Activated naive CD4-positive, alpha-beta T cell treated with anti-CD3 and anti-CD28 coated beads for 36 hours (primary cell): ENCODE measurements at regions of chr13 and their contacts with region 1.

Region 1: GRCh38 chr13:52450012-52450792 is at the start of gene VPS36:
- DNase-seq: peak; percentile 94
- H3K4me3 Mint-ChIP-seq: peak within 1 kb of the TSS; percentile 92
- H3K27ac Mint-ChIP-seq: peak within 1 kb of the TSS; percentile 86
- H3K4me1 Mint-ChIP-seq: peaks cover 30% of the 10 kb centered on the region
- H3K27me3 Mint-ChIP-seq: no peaks in the 10 kb centered on the region
- total RNA-seq, gene VPS36: 25.3 to 32.0 TPM

Region 2: DNA sequence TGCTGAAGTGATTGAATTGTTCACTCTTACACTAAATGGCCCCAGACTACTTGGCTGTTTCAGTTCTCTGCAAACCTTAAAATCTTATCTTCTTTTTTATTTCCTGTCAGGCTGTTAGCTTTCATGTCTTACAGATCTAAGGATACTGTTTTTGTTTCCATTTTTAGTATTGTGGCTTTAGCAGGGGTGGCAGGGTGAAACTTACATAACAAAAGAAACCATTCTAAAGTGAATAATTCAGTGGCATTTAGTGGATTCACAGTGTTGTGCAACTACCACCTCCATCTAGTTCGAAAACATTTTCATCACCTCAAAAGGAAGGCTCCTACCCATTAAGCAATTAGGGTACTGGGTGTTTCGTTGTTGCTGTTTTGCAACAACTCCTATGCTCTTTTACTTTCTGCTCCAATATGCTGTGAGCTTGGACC is 625.0 kb before region 1 on chr13:
- CTCF ChIA-PET with region 1: no interaction called
- intact Hi-C with region 1: loop called (anchors 2 kb)
- DNase-seq: no peak
- H3K4me3 Mint-ChIP-seq: peak overlapping the region; percentile 77
- H3K27ac Mint-ChIP-seq: peak overlapping the region; percentile 98
- H3K4me1 Mint-ChIP-seq: peaks cover 84% of the 10 kb centered on the region
- H3K27me3 Mint-ChIP-seq: no peaks in the 10 kb centered on the region

Region 3: DNA sequence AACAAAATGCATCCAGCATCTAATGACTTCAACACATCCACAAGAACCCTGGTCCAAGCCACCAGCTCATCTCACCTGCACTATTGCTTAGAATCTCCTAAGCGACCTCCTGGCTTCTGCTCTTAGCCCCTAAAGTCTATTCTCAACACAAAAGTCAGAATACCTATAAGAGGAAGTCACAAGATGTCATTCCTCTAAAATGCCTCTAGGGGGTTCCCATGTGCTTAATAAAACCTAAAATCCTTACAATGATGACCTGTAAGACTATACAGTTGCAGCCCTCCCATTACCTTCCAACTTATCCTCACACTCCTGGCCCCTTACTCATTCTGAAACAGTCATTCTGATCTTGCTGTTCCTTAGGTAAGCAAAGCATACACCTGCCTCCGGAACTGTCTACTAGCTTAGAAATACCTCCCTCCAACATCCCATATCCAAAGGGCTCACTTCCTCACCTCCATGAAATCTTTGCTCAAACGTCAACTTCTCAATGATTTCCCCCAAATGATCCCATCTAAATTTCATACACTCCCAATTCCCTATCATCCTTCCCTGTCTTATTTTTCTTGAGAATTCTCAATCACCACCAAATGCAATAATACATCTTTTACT is 449.0 kb before region 1 on chr13:
- CTCF ChIA-PET with region 1: no interaction called
- intact Hi-C with region 1: loop called (anchors 1 kb)
- DNase-seq: no peak
- H3K4me3 Mint-ChIP-seq: no peak overlapping the region
- H3K27ac Mint-ChIP-seq: no peak overlapping the region
- H3K4me1 Mint-ChIP-seq: no peaks in the 10 kb centered on the region
- H3K27me3 Mint-ChIP-seq: no peaks in the 10 kb centered on the region

Region 4: DNA sequence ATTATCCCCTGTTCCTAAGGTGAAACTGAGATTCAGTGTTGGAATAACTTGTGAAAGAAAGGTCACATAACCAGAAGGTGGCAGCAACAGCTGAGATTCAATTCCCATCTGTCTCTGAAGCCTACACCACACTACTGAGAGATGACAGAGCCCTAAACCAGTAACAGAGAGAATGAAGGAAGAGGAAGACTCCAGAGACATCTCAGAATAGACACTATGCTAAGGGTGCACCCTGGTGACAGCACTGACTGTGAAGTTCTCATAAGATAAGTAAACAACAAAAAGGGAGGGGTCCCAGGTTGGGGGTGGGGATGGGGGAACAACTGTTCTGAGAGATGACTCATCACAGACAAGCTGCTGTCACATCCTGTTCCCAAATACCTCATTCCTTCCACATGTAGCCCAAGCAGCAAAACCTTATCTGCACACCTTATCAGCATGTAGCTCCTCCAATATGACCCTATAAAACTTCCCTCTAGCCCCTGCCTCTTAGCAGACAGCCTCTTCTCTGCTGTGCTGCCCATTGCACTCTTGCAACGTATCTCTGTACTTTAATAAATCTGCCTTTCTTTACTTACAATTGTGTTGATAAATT is 379.2 kb before region 1 on chr13:
- CTCF ChIA-PET with region 1: no interaction called
- intact Hi-C with region 1: loop called (anchors 1 kb)
- DNase-seq: peak; percentile 73
- H3K4me3 Mint-ChIP-seq: no peak overlapping the region
- H3K27ac Mint-ChIP-seq: no peak overlapping the region
- H3K4me1 Mint-ChIP-seq: peaks cover 11% of the 10 kb centered on the region
- H3K27me3 Mint-ChIP-seq: peaks cover 16% of the 10 kb centered on the region

Region 5: GRCh38 chr13:52194184-52194868 is 255.9 kb before region 1 on chr13:
- CTCF ChIA-PET with region 1: interaction called, 4 read pairs
- intact Hi-C with region 1: loop called (anchors 1 kb)
- DNase-seq: peak; percentile 90
- H3K4me3 Mint-ChIP-seq: peak overlapping the region; percentile 98
- H3K27ac Mint-ChIP-seq: peak overlapping the region; percentile 97
- H3K4me1 Mint-ChIP-seq: peaks cover 30% of the 10 kb centered on the region
- H3K27me3 Mint-ChIP-seq: no peaks in the 10 kb centered on the region

Region 6: GRCh38 chr13:52405767-52406494 is 44.3 kb before region 1 on chr13 and contains the start of gene THSD1:
- CTCF ChIA-PET with region 1: interaction called, 7 read pairs
- intact Hi-C with region 1: loop called (anchors 2 kb)
- DNase-seq: peak; percentile 28
- H3K4me3 Mint-ChIP-seq: peak within 1 kb of the TSS; percentile 52
- H3K27ac Mint-ChIP-seq: no peak within 1 kb of the TSS
- H3K4me1 Mint-ChIP-seq: peaks cover 17% of the 10 kb centered on the region
- H3K27me3 Mint-ChIP-seq: peaks cover 30% of the 10 kb centered on the region
- total RNA-seq, gene THSD1: 0.07 TPM in 1 of 2 experiments, not detected in the other

Region 7: DNA sequence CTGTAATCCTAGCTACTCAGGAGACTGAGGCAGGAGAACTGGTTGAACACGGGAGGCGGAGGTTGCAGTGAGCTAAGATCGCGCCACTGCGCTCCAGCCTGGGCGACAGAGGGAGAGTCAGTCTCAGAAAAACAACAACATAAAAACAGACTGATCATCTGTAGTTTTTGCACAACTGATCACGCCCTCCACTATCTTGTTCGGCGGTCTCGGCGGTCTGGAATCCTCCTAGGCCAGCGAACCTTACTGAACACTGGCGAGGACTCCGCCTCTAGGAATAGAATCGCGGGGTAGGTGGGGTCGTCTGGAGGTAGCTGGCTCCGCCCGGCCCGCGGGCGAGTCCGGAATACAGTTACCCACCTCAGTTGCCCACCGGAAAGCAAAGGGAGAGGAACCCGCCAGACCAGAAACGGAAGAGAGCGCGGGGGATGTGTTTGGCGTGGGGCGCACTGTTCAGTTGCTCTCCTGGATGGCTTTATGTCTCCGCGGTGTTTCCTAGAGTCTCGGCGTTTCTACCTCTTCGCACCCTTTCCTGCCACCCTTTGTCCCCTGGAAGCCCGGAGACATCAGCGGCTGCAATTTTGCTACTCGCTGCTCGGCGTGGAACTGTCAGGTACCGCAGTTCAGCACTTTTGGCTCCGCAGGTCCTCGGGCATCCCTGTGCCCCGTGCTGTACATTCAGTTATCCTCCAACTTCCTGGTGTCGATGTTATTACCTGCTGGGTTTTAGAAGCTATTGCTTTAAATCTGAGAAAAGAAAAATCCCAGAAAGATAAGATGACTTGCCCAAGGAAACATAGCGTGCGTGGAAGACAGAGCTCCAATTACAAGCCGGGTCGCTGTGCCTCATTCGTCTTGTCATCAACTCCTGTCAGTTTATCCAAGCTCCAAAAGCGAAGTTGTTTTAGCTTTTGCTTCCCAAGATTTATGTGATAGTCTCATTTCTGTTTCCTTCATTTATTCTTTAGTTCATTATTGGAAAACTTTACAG is 167.2 kb after region 1 on chr13:
- CTCF ChIA-PET with region 1: interaction called, 3 read pairs
- intact Hi-C with region 1: loop called (anchors 1 kb)
- DNase-seq: peak; percentile 90
- H3K4me3 Mint-ChIP-seq: peak overlapping the region; percentile 100
- H3K27ac Mint-ChIP-seq: peak overlapping the region; percentile 93
- H3K4me1 Mint-ChIP-seq: peaks cover 27% of the 10 kb centered on the region
- H3K27me3 Mint-ChIP-seq: no peaks in the 10 kb centered on the region

Region 8: GRCh38 chr13:52896827-52897659 is 446.8 kb after region 1 on chr13:
- CTCF ChIA-PET with region 1: no interaction called
- intact Hi-C with region 1: no loop called
- DNase-seq: peak; percentile 8
- H3K4me3 Mint-ChIP-seq: no peak overlapping the region
- H3K27ac Mint-ChIP-seq: no peak overlapping the region
- H3K4me1 Mint-ChIP-seq: no peaks in the 10 kb centered on the region
- H3K27me3 Mint-ChIP-seq: peaks cover 5% of the 10 kb centered on the region